A549 (cell line): ENCODE measurements at regions of chr6 and their contacts with region 1.

Region 1: GRCh38 chr6:53794720-53795253 is at the start of gene LRRC1:
- DNase-seq: peak; percentile 74 to 87
- ATAC-seq: peak; percentile 78 to 84
- H3K4me3 ChIP-seq: peak within 1 kb of the TSS; percentile 88
- H3K27ac ChIP-seq: peak within 1 kb of the TSS; percentile 95 to 97
- H3K4me1 ChIP-seq: peaks cover 18% of the 10 kb centered on the region; the same call in 2 of the 3 replicates
- CTCF ChIP-seq: no peak
- EP300 ChIP-seq: no peak
- POLR2A ChIP-seq: peak; percentile 63
- RAD21 ChIP-seq: no peak
- polyA plus RNA-seq, gene LRRC1: 7.3 and 8.0 TPM in 2 replicates

Region 2: DNA sequence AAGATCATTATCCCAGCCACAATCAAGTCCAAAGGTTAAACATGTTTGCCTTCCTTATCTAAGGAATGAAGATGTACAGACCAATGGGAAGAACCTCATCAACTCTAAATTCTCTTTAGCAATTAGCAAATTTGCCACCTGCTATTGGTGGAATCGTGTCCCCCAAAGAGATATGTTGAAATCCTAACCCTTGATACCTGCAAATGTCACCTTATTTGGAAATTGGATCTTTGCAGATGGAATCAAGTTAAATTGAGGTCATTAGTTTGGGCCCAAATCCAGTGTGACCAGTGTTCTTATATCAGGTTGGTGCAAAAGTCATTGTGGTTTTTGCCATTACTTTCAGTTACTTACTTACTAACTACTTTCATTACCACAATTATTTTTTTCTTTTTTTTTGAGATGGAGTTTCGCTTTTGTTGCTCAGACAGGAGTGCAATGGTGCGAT is 160.6 kb before region 1 on chr6:
- CTCF ChIA-PET with region 1: no interaction called
- POLR2A ChIA-PET with region 1: no interaction called
- DNase-seq: no peak
- ATAC-seq: no peak
- H3K4me3 ChIP-seq: no peak overlapping the region
- H3K27ac ChIP-seq: no peak overlapping the region
- H3K4me1 ChIP-seq: peaks cover 21% of the 10 kb centered on the region
- CTCF ChIP-seq: no peak
- EP300 ChIP-seq: no peak
- POLR2A ChIP-seq: no peak
- RAD21 ChIP-seq: no peak

Region 3: DNA sequence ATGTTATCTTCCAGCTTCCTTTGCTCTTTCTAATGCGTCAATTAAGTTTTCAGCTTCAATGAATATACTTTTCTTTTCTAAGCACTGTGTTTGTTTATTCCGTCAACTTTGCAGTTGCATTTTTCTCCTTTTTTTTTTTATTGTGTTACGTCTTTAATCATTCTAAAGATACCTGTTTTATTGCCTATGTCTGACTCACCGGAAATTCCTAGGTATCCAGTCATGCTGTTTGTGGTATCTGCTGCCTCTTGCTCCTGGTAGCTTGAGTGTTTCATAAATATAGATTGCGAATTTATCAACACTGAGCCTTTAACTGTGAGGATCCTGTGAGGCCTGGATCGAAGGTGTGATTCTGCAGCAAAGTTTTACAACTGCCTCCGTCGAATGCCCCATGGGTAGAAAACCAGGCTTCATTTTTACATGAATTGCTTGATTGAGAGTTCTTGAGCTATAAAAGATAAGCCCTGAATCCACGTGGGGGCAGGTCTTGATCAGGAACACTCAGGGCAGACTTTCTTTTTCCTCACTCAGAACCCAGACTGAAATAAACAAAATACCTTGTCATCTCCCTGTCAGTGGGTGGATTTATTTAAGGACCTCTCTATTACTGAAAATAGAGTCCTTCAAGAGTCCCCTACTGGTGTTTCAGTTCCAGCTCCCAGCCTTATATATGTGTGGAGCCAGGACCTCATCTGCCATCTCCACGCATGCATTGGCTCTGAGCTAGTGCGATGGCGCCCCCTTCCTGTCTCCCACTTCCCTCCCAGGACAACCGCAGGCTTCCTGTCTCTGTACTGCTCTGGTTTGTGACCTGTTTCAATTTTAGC is 60.1 kb before region 1 on chr6:
- CTCF ChIA-PET with region 1: interaction called, 4 read pairs
- POLR2A ChIA-PET with region 1: interaction called, 11 read pairs
- DNase-seq: peak; percentile 56 to 77
- ATAC-seq: peak; percentile 87 to 98
- H3K4me3 ChIP-seq: no peak overlapping the region; the same call in 2 of the 3 replicates
- H3K27ac ChIP-seq: peak overlapping the region; percentile 74 to 85
- H3K4me1 ChIP-seq: peaks cover 22% of the 10 kb centered on the region
- CTCF ChIP-seq: peak; percentile 41; the same call in 2 of the 3 replicates
- EP300 ChIP-seq: 0 out of 5 replicates have a peak, but pooled peaks of 1 of the 2 experiments have one; percentile 38
- POLR2A ChIP-seq: no peak
- RAD21 ChIP-seq: peak; percentile 12 to 51; a peak in 2 of 5 replicates

Region 4: DNA sequence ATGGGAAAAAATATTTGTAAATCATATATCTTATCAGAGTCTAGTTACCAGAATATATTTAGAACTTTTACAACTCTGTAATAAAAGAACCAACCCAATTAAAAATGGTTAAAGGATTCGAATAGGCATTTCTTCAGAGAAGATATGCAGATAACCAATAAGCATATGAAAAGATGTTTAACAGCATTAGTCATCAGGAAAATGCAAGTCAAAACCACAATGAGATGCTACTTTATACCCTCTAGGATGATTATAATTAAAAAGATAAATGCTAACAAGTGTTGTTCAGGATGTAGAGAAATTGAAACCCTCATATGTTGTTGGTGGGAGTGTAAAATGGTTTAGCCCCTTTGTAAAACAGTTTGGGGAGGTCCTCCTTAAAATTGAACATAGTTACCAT is 94.1 kb after region 1 on chr6:
- CTCF ChIA-PET with region 1: no interaction called
- POLR2A ChIA-PET with region 1: no interaction called
- DNase-seq: no peak
- ATAC-seq: no peak
- H3K4me3 ChIP-seq: no peak overlapping the region
- H3K27ac ChIP-seq: no peak overlapping the region
- H3K4me1 ChIP-seq: no peaks in the 10 kb centered on the region
- CTCF ChIP-seq: no peak
- EP300 ChIP-seq: no peak
- POLR2A ChIP-seq: no peak
- RAD21 ChIP-seq: no peak